Stomach (tissue), 19 donors: ENCODE measurements at regions of chr19 and their contacts with region 1.

Region 1: DNA sequence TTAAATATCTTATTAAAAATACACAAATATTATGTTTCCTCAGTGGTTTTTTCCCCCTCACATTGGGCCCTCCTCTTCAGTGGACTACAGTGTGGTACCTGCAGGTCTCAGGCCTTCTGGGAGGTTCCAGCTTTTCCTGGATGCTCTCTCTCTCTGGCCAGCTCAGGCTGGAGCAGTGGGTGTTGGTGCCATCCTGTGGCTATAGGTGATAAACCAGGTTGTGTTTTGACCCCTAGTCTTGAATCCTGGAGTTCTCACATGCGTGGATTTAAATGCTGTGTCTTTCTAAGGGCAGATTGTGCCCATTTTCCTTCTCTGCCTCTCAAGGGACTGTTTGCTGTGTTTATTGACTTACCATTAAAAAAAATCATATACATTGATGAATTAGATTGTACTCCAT is 41.2 kb upstream of the ZNF527 start:
- DNase-seq: no peak
- H3K4me3 ChIP-seq: no peak overlapping the region
- H3K27ac ChIP-seq: no peak overlapping the region
- H3K4me1 ChIP-seq: peaks cover 0 to 9% (median 7%) of the 10 kb centered on the region in 4 donors
- H3K27me3 ChIP-seq: no peaks in the 10 kb centered on the region
- CTCF ChIP-seq: no peak
- EP300 ChIP-seq: no peak
- POLR2A ChIP-seq: no peak

Region 2: GRCh38 chr19:36849701-36850558 is 479.8 kb before region 1 on chr19:
- intact Hi-C with region 1: loop called (anchors 10 kb)
- DNase-seq: peak; percentile 90 to 97
- H3K4me3 ChIP-seq: peak overlapping the region; percentile 72 to 91 (median 78)
- H3K27ac ChIP-seq: peak overlapping the region; percentile 75 to 90 (median 87)
- H3K4me1 ChIP-seq: peaks cover 12 to 36% (median 21%) of the 10 kb centered on the region in 4 donors
- H3K27me3 ChIP-seq: no peaks in the 10 kb centered on the region
- CTCF ChIP-seq: no peak
- EP300 ChIP-seq: no peak
- POLR2A ChIP-seq: no peak

Region 3: GRCh38 chr19:37045140-37045539 is 284.5 kb before region 1 on chr19:
- intact Hi-C with region 1: no loop called
- DNase-seq: no peak
- H3K4me3 ChIP-seq: no peak overlapping the region
- H3K27ac ChIP-seq: no peak overlapping the region
- H3K4me1 ChIP-seq: no peaks in the 10 kb centered on the region
- H3K27me3 ChIP-seq: no peaks in the 10 kb centered on the region
- CTCF ChIP-seq: no peak
- EP300 ChIP-seq: no peak
- POLR2A ChIP-seq: no peak

Region 4: DNA sequence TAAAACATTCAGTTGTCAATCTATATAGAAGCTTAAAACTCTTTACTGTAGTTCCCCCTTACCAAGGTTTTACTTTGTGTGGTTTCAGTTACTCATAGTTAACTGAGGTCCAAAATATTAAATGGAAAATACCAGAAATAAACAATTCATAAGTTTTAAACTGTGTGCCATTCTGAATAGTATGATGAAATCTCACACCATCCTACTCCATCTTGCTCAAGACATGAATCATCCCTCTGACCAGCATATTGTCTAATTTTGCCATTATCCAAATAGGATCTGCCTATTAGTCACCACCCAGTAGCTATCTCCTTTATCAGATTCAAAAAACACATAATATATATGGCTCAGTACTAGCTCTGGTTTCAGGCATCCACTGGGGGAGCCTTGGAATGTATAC is 242.5 kb after region 1 on chr19:
- intact Hi-C with region 1: no loop called
- DNase-seq: no peak
- H3K4me3 ChIP-seq: no peak overlapping the region
- H3K27ac ChIP-seq: no peak overlapping the region
- H3K4me1 ChIP-seq: no peaks in the 10 kb centered on the region
- H3K27me3 ChIP-seq: no peaks in the 10 kb centered on the region
- CTCF ChIP-seq: no peak
- EP300 ChIP-seq: no peak
- POLR2A ChIP-seq: no peak